MCF 10A (cell line): ENCODE measurements at regions of chr1 and their contacts with region 1.

Region 1: DNA sequence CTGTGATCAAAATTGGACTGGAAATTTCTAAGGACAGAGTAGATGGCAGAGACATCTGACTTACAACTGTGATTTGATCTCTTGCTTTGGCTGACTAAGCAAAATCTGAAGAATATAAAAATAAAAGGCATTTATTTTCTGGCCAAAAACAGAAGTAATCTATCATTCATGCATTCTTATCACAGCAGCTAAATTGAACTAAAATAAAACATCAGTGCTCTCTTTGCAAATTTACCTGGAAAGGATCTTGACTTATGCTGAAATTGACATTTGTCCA is 81.4 kb upstream of the ZNF678 start:
- DNase-seq: no peak
- H3K4me3 Mint-ChIP-seq: no peak overlapping the region
- H3K27ac Mint-ChIP-seq: no peak overlapping the region
- H3K4me1 Mint-ChIP-seq: no peaks in the 10 kb centered on the region
- H3K27me3 Mint-ChIP-seq: peaks cover 66% of the 10 kb centered on the region
- CTCF ChIP-seq: no peak

Region 2: DNA sequence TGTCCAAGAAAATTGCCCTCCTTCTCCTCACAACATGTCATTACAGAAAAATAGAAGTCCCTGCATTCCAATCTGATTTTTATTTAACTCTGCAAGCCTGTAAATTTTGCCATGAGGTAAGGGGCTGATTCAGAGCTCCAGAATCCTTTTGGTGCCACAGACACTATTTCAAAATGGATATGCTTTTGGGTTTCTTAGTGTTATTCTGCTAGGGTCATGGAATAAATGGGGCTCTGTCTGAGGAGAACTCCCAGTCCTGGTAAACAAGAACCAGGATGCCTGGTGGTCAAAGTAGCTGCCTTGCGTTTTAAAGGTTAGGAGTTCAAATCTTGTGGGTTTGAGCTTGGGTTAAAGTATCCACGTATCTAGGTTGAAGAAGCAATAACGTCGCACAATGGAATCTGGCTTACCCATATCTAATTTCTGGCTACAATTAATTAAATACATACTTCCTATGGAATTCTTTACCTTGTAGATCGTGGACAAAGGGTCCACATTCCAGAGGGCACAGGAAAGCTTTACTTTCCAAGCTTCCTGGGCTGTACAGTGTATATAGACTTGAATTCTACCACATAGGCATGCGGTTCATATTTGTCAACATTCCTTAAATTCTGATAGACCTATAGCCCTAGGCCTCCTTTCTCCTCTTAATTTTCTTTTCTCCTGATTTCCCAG is 65.7 kb before region 1 on chr1:
- CTCF ChIA-PET with region 1: no interaction called
- POLR2A ChIA-PET with region 1: no interaction called
- intact Hi-C with region 1: no loop called
- DNase-seq: no peak
- H3K4me3 Mint-ChIP-seq: no peak overlapping the region
- H3K27ac Mint-ChIP-seq: no peak overlapping the region
- H3K4me1 Mint-ChIP-seq: no peaks in the 10 kb centered on the region
- H3K27me3 Mint-ChIP-seq: peaks cover 2% of the 10 kb centered on the region
- CTCF ChIP-seq: no peak

Region 3: GRCh38 chr1:227465256-227465655 is 16.7 kb before region 1 on chr1:
- CTCF ChIA-PET with region 1: interaction called, 18 read pairs
- POLR2A ChIA-PET with region 1: no interaction called
- intact Hi-C with region 1: no loop called
- DNase-seq: no peak
- H3K4me3 Mint-ChIP-seq: no peak overlapping the region
- H3K27ac Mint-ChIP-seq: no peak overlapping the region
- H3K4me1 Mint-ChIP-seq: peaks cover 1% of the 10 kb centered on the region
- H3K27me3 Mint-ChIP-seq: peaks cover 7% of the 10 kb centered on the region
- CTCF ChIP-seq: no peak